Naive thymus-derived CD4-positive, alpha-beta T cell (primary cell): ENCODE measurements at regions of chr16 and their contacts with region 1.

Region 1: DNA sequence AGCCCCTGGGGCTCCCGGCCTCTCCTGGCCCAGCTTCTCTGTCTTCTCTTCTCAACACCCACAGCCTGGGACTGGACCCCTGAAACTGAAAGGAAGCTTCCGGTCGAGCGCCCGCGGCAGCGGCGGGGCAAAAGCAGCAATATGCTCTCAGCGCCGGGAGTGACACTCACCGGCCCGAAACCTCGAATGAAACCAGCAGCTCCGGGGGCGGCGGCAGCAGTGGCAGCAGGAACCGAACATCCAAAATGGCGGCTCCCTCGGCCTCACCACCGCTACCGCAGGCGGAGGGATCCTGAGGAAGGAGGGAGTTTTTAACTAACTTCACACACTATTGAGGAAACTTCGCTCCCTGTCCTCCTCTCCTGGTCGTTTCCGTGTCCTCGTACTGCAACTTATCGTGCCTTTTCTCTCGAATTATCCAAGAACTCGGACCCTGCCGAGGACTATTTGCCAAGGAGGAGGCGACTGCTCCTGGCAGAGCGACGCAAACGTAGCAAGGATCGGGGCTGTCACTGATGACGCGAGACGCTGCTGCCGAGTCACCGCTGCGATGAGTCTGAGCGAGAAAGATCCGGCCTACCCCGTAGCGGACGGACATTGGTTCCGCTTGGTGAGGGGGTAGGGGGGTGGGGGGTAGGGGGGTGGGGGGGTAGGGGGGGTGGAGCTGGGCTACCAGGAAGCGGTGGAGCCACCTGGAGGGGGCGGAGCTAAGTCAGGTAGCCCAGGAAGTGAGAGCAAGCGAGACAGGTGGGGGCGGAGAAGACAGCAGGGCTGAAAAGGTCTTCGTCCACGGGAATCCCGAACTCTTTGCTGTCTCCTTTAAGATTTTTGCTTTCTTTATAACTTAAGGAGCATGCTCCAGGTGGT is at the start of gene AP1G1:
- DNase-seq: peak; percentile 78 to 98 (median 94)
- ATAC-seq: peak; percentile 95
- H3K4me3 ChIP-seq: peak within 1 kb of the TSS; percentile 99
- H3K4me3 Mint-ChIP-seq: peak within 1 kb of the TSS; percentile 86 to 99 (median 97)
- H3K27ac ChIP-seq: peak within 1 kb of the TSS; percentile 99
- H3K27ac Mint-ChIP-seq: peak within 1 kb of the TSS; percentile 98 to 100 (median 100)
- H3K4me1 ChIP-seq: peaks cover 22 to 24% of the 10 kb centered on the region in 2 donors
- H3K4me1 Mint-ChIP-seq: peaks cover 7 to 68% (median 37%) of the 10 kb centered on the region in 7 donors
- H3K27me3 ChIP-seq: no peaks in the 10 kb centered on the region
- H3K27me3 Mint-ChIP-seq: peaks cover 0 to 2% (median 0%) of the 10 kb centered on the region in 5 donors
- total RNA-seq, gene AP1G1: 95.3 to 147 (median 100.0) TPM

Region 2: DNA sequence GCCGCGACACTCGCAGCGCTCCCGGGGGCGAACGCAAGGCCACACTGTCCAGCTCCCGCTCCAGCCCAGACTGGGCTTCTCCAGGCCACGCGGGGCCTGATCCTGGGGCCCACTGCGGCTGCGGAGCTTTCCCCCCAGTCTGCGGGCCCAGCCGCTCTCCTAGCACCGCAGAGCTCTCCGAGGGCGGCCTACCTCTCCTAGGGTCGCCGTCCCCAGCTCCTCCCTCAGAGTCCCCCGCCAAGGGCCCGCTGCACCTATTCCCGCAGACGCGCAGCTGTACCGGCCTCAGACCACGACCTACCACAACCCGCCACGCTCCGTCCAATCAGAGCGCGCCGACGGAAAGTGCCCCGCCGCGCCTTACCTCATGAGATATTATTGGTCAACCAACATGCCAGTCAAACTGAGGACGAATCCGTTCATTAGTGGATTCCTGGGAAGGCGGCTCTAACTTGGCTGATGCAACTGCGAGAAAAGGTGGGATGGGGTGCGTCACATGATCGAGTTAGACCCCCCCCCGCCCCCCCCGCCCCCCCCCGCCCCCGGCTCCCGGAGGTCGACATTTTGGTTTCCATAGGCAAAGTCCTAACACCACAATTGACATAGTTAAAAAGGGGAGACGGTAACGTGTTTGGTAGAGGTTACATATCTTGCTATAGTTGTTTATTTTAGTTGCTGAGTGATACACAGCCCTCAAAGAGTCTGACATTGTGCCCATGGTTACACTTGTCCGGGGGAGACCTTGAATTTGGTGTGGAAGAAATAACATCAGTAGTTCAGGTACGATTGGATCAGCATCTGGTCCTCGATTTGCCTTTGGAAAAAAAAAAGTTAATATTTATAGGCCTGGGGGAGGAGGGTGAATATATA is 1519.4 kb before region 1 on chr16 and contains the start of gene AARS1:
- CTCF ChIA-PET with region 1: no interaction called
- POLR2A ChIA-PET with region 1: no interaction called
- intact Hi-C with region 1: loop called in 1 of 2 experiments (anchors 2 kb)
- DNase-seq: peak; percentile 79 to 97 (median 96)
- ATAC-seq: peak; percentile 98
- H3K4me3 ChIP-seq: peak within 1 kb of the TSS; percentile 65
- H3K4me3 Mint-ChIP-seq: peak within 1 kb of the TSS; percentile 90 to 100 (median 98)
- H3K27ac ChIP-seq: peak within 1 kb of the TSS; percentile 85
- H3K27ac Mint-ChIP-seq: peak within 1 kb of the TSS; percentile 95 to 99 (median 98)
- H3K4me1 ChIP-seq: no peaks in the 10 kb centered on the region
- H3K4me1 Mint-ChIP-seq: peaks cover 6 to 37% (median 25%) of the 10 kb centered on the region in 7 donors
- H3K27me3 ChIP-seq: no peaks in the 10 kb centered on the region
- H3K27me3 Mint-ChIP-seq: peaks cover 0 to 2% (median 0%) of the 10 kb centered on the region in 5 donors
- total RNA-seq, gene AARS1: 24.2 to 96.7 (median 94.0) TPM

Region 3: DNA sequence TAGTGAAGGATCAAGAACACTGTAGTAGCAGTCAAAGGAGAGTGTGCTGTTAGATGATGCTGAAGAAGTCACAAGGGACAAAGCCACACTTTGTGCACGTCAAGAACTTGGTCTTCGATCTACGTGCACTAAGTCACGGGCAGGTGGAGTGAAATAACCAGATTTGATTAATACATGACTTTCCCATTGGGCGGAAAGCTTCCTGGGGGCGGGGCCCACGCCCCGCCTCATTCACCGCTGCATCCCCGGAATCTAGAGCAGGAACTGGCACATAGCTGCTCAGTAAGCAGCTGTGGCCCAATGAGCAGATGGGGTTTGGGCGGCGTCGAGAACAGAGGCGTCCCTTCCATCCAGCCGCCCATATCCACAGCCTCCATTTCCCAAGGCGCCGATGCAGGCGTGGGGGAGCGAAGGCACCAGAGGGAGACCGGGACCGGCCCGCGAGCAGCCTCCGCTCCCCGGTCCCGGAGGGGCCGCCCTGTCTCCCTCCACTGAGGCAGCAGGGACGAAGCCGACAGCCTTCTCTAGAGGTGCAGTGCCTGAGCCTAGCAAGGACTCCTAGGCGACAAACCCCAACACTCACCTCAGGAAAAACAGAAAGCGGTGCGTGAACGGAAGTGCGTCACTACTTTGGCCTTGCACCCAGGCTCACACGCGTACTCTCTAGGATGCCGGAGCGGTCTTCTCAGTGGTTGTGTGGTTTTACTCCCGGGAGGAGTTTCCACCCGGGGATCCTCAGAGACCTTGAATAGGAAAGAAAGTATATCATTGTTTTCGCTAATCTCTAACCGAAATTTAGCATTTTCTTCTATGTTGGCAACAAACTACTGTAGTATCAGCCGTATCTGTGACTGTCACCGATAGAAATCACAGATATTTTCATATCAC is 324.6 kb before region 1 on chr16:
- CTCF ChIA-PET with region 1: no interaction called
- POLR2A ChIA-PET with region 1: no interaction called
- intact Hi-C with region 1: loop called in 1 of 2 experiments (anchors 1 kb)
- DNase-seq: peak; percentile 57 to 90 (median 86)
- ATAC-seq: peak; percentile 91
- H3K4me3 ChIP-seq: peak overlapping the region; percentile 89
- H3K4me3 Mint-ChIP-seq: peak overlapping the region; percentile 82 to 95 (median 91)
- H3K27ac ChIP-seq: peak overlapping the region; percentile 92
- H3K27ac Mint-ChIP-seq: peak overlapping the region; percentile 85 to 97 (median 96)
- H3K4me1 ChIP-seq: peaks cover 7 to 10% of the 10 kb centered on the region in 2 donors
- H3K4me1 Mint-ChIP-seq: peaks cover 13 to 23% (median 17%) of the 10 kb centered on the region in 7 donors
- H3K27me3 ChIP-seq: no peaks in the 10 kb centered on the region
- H3K27me3 Mint-ChIP-seq: peaks cover 0 to 4% (median 0%) of the 10 kb centered on the region in 5 donors

Region 4: GRCh38 chr16:71564155-71564967 is 244.5 kb before region 1 on chr16:
- CTCF ChIA-PET with region 1: no interaction called
- POLR2A ChIA-PET with region 1: no interaction called
- intact Hi-C with region 1: no loop called
- DNase-seq: peak in 1 of 9 donors; percentile 3
- ATAC-seq: no peak
- H3K4me3 ChIP-seq: peak overlapping the region; percentile 63
- H3K4me3 Mint-ChIP-seq: peak overlapping the region; percentile 83 to 98 (median 91)
- H3K27ac ChIP-seq: peak overlapping the region; percentile 75
- H3K27ac Mint-ChIP-seq: peak overlapping the region; percentile 92 to 98 (median 94)
- H3K4me1 ChIP-seq: peaks cover 13 to 15% of the 10 kb centered on the region in 2 donors
- H3K4me1 Mint-ChIP-seq: peaks cover 10 to 23% (median 16%) of the 10 kb centered on the region in 7 donors
- H3K27me3 ChIP-seq: no peaks in the 10 kb centered on the region
- H3K27me3 Mint-ChIP-seq: peaks cover 0 to 15% (median 0%) of the 10 kb centered on the region in 5 donors

Region 5: GRCh38 chr16:71767060-71767900 is 41.5 kb before region 1 on chr16:
- CTCF ChIA-PET with region 1: no interaction called
- POLR2A ChIA-PET with region 1: no interaction called
- intact Hi-C with region 1: loop called in 1 of 2 experiments (anchors 5 kb)
- DNase-seq: no peak
- ATAC-seq: no peak
- H3K4me3 ChIP-seq: no peak overlapping the region
- H3K4me3 Mint-ChIP-seq: peak overlapping the region in 3 of 10 donors; percentile 18 to 47 (median 42)
- H3K27ac ChIP-seq: no peak overlapping the region
- H3K27ac Mint-ChIP-seq: peak overlapping the region; percentile 30 to 72 (median 48)
- H3K4me1 ChIP-seq: peaks cover 0 to 10% of the 10 kb centered on the region in 2 donors
- H3K4me1 Mint-ChIP-seq: peaks cover 0 to 22% (median 15%) of the 10 kb centered on the region in 7 donors
- H3K27me3 ChIP-seq: no peaks in the 10 kb centered on the region
- H3K27me3 Mint-ChIP-seq: no peaks in the 10 kb centered on the region

Region 6: GRCh38 chr16:71845639-71846430 is 37.0 kb after region 1 on chr16 and contains the start of gene ATXN1L:
- CTCF ChIA-PET with region 1: no interaction called
- POLR2A ChIA-PET with region 1: interaction called, 11 read pairs
- intact Hi-C with region 1: loop called (anchors 1 kb)
- DNase-seq: peak; percentile 91 to 100 (median 95)
- ATAC-seq: peak; percentile 97
- H3K4me3 ChIP-seq: peak within 1 kb of the TSS; percentile 97
- H3K4me3 Mint-ChIP-seq: peak within 1 kb of the TSS; percentile 92 to 96 (median 94)
- H3K27ac ChIP-seq: peak within 1 kb of the TSS; percentile 92
- H3K27ac Mint-ChIP-seq: peak within 1 kb of the TSS; percentile 95 to 98 (median 97)
- H3K4me1 ChIP-seq: peaks cover 10 to 16% of the 10 kb centered on the region in 2 donors
- H3K4me1 Mint-ChIP-seq: peaks cover 18 to 50% (median 42%) of the 10 kb centered on the region in 7 donors
- H3K27me3 ChIP-seq: no peaks in the 10 kb centered on the region
- H3K27me3 Mint-ChIP-seq: no peaks in the 10 kb centered on the region
- total RNA-seq, gene ATXN1L: 24.6 to 52.9 (median 30.7) TPM

Region 7: GRCh38 chr16:71894921-71895678 is 86.3 kb after region 1 on chr16 and contains the start of gene IST1:
- CTCF ChIA-PET with region 1: interaction called, 6 read pairs
- POLR2A ChIA-PET with region 1: interaction called, 60 read pairs
- intact Hi-C with region 1: loop called (anchors 1 kb)
- DNase-seq: peak; percentile 88 to 98 (median 98)
- ATAC-seq: peak; percentile 97
- H3K4me3 ChIP-seq: peak within 1 kb of the TSS; percentile 99
- H3K4me3 Mint-ChIP-seq: peak within 1 kb of the TSS; percentile 95 to 99 (median 96)
- H3K27ac ChIP-seq: peak within 1 kb of the TSS; percentile 98
- H3K27ac Mint-ChIP-seq: peak within 1 kb of the TSS; percentile 92 to 98 (median 97)
- H3K4me1 ChIP-seq: peaks cover 22 to 25% of the 10 kb centered on the region in 2 donors
- H3K4me1 Mint-ChIP-seq: peaks cover 23 to 43% (median 30%) of the 10 kb centered on the region in 7 donors
- H3K27me3 ChIP-seq: no peaks in the 10 kb centered on the region
- H3K27me3 Mint-ChIP-seq: no peaks in the 10 kb centered on the region
- total RNA-seq, gene IST1: 176 to 303 (median 286) TPM

Region 8: DNA sequence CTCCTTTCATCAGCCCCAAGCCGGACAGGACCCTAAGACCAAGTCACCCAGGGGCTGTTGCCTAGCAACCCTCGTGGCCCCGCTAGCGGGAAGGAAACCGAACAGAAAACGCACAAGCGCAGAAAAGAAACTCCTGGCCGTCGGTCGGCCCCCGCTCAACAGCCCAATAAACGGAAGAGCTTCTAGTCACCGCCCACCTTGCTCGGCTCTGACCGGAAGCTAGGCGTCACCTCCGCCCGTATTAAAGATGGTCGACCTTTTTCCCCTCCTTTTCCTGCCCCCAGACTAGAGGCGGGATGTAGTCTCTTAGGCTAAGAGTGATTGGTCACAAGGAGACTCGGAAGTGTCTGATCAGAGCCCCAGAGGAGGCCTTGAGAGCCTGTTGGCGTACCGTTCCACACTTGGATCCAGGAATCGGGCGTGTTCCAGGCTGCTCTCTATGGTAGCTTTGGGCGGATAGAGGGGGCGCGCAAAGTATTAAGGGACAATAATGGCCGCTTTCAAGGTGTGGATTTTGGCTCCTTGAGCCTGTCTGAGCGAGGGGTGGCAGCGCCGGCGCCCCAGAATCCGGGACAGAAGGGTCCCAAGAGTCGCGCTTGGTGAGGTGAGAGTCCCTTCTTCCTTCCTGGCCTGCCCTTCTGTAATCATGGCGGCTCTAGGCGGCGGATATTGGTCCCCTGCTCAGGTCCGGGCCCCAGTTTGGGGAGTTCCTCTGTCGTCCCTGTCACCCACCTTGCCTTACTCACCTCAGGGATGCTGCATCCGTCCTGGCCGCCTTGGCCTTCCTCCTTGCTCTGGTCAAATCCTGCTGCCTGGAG is 284.8 kb after region 1 on chr16 and contains the starts of genes DHX38 and TXNL4B:
- CTCF ChIA-PET with region 1: no interaction called
- POLR2A ChIA-PET with region 1: interaction called, 3 read pairs
- intact Hi-C with region 1: loop called (anchors 1 kb)
- DNase-seq: peak; percentile 70 to 95 (median 92)
- ATAC-seq: peak; percentile 98
- H3K4me3 ChIP-seq: peak within 1 kb of the TSS; percentile 86
- H3K4me3 Mint-ChIP-seq: peak within 1 kb of the TSS; percentile 94 to 100 (median 98)
- H3K27ac ChIP-seq: peak within 1 kb of the TSS; percentile 93
- H3K27ac Mint-ChIP-seq: peak within 1 kb of the TSS; percentile 92 to 100 (median 99)
- H3K4me1 ChIP-seq: peaks cover 21 to 24% of the 10 kb centered on the region in 2 donors
- H3K4me1 Mint-ChIP-seq: peaks cover 33 to 70% (median 63%) of the 10 kb centered on the region in 7 donors
- H3K27me3 ChIP-seq: no peaks in the 10 kb centered on the region
- H3K27me3 Mint-ChIP-seq: no peaks in the 10 kb centered on the region
- total RNA-seq, gene DHX38: 90.1 to 113 (median 104) TPM
- total RNA-seq, gene TXNL4B: 12.5 to 20.9 (median 18.5) TPM